HEK293 (cell line): ENCODE measurements at regions of chr5 and their contacts with region 1.

Region 1: GRCh38 chr5:59810041-59810440 is 83.5 kb downstream of the PDE4D start:
- H3K4me3 ChIP-seq: peak overlapping the region; percentile 16
- H3K27ac ChIP-seq: no peak overlapping the region
- H3K4me1 ChIP-seq: no peaks in the 10 kb centered on the region
- CTCF ChIP-seq: peak; percentile 63

Region 2: GRCh38 chr5:59799668-59800346 is 10.2 kb before region 1 on chr5:
- CTCF ChIA-PET with region 1: interaction called, 11 read pairs
- POLR2A ChIA-PET with region 1: no interaction called
- H3K4me3 ChIP-seq: no peak overlapping the region
- H3K27ac ChIP-seq: no peak overlapping the region
- H3K4me1 ChIP-seq: peaks cover 15% of the 10 kb centered on the region
- CTCF ChIP-seq: peak; percentile 68

Region 3: GRCh38 chr5:59823420-59823819 is 13.4 kb after region 1 on chr5:
- CTCF ChIA-PET with region 1: interaction called, 11 read pairs
- POLR2A ChIA-PET with region 1: no interaction called
- H3K4me3 ChIP-seq: no peak overlapping the region
- H3K27ac ChIP-seq: no peak overlapping the region
- H3K4me1 ChIP-seq: no peaks in the 10 kb centered on the region
- CTCF ChIP-seq: no peak

Region 4: DNA sequence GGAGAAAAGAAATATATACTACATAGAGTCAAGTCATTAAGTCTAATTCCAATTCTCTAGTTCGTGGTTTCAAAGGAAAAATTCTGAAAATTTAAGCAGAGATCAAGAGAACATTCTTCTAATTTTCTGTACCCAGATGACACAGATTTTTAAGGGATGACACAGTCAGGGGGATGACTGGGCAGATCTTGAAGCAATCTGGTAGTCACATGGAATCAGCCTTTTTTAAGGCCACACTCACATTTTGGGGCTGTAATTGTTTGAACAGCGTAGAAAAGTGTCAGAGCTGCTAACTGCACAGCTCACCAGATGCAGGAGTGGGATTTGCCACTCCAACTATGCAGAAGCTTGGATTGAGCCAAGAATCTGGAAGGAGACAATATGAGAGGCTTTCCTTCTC is 63.1 kb after region 1 on chr5:
- CTCF ChIA-PET with region 1: interaction called, 10 read pairs
- POLR2A ChIA-PET with region 1: no interaction called
- H3K4me3 ChIP-seq: no peak overlapping the region
- H3K27ac ChIP-seq: no peak overlapping the region
- H3K4me1 ChIP-seq: no peaks in the 10 kb centered on the region
- CTCF ChIP-seq: no peak

Region 5: GRCh38 chr5:60287174-60287771 is 477.2 kb after region 1 on chr5:
- CTCF ChIA-PET with region 1: interaction called, 59 read pairs
- POLR2A ChIA-PET with region 1: no interaction called
- H3K4me3 ChIP-seq: no peak overlapping the region
- H3K27ac ChIP-seq: no peak overlapping the region
- H3K4me1 ChIP-seq: no peaks in the 10 kb centered on the region
- CTCF ChIP-seq: peak; percentile 41; the same call in 1 of the 2 replicates

Region 6: GRCh38 chr5:60323596-60323995 is 513.6 kb after region 1 on chr5:
- CTCF ChIA-PET with region 1: no interaction called
- POLR2A ChIA-PET with region 1: no interaction called
- H3K4me3 ChIP-seq: no peak overlapping the region
- H3K27ac ChIP-seq: no peak overlapping the region
- H3K4me1 ChIP-seq: no peaks in the 10 kb centered on the region
- CTCF ChIP-seq: no peak

Region 7: GRCh38 chr5:60382716-60383115 is 572.7 kb after region 1 on chr5:
- CTCF ChIA-PET with region 1: interaction called, 21 read pairs
- POLR2A ChIA-PET with region 1: no interaction called
- H3K4me3 ChIP-seq: no peak overlapping the region
- H3K27ac ChIP-seq: no peak overlapping the region
- H3K4me1 ChIP-seq: no peaks in the 10 kb centered on the region
- CTCF ChIP-seq: no peak